Heart right ventricle (tissue), 16 donors: ENCODE measurements at regions of chr22 and their contacts with region 1.

Region 1: DNA sequence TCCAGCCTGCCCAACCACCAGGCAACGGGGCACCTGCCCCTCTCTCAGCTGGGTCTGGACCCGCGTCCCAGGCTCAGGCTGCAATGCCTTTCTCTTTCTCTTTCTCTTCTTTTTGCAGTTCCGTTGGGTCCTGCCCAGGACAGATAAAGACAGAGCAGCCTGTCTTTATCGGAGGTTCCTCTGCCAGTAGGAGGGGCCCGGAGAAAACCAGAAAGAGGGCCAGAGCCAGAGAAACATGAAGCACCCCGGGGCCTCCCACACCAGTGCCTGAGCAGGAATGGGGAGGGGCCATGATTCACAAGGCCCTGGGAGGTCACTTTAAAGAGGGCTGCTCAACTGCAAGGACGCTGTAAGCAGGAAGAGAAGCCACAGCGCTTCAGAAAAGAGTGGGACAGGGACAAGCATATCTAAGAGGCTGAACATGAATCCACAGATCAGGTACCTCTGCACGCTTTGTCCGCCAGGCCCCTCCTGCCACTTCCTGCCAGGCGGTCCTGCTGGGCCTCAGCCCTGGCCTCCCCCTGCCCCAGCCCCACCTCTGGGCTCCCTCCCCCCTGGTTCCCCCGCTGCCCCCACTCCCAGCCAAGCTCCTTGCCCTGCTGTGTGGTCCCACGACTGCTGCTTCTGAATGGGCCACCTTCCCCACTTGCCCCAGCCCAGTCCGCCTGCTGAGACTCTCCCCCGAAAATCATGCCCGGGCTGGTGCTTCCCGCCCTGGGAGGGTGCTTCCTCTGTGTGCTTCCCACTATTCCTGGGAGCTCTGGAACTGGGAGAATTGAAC is at the start of gene APOBEC3C:
- DNase-seq: peak; percentile 65 to 79
- ATAC-seq: peak; percentile 91 to 97 (median 96)
- H3K4me3 ChIP-seq: peak within 1 kb of the TSS; percentile 41 to 72 (median 61)
- H3K27ac ChIP-seq: peak within 1 kb of the TSS; percentile 58 to 95 (median 82)
- H3K4me1 ChIP-seq: peaks cover 0 to 27% (median 14%) of the 10 kb centered on the region in 9 donors
- H3K27me3 ChIP-seq: no peaks in the 10 kb centered on the region
- CTCF ChIP-seq: no peak
- total RNA-seq, gene APOBEC3C: 23.2 to 43.3 (median 25.7) TPM

Region 2: GRCh38 chr22:39078329-39078728 is 64.2 kb after region 1 on chr22:
- intact Hi-C with region 1: loop called in 2 of 10 experiments (anchors 2 to 10 kb)
- DNase-seq: no peak
- ATAC-seq: no peak
- H3K4me3 ChIP-seq: peak overlapping the region in 2 of 10 donors; percentile 66 to 67
- H3K27ac ChIP-seq: peak overlapping the region in 1 of 10 donors; percentile 94
- H3K4me1 ChIP-seq: peaks cover 0 to 12% (median 12%) of the 10 kb centered on the region in 9 donors
- H3K27me3 ChIP-seq: no peaks in the 10 kb centered on the region
- CTCF ChIP-seq: no peak

Region 3: GRCh38 chr22:39117585-39118191 is 103.6 kb after region 1 on chr22:
- intact Hi-C with region 1: loop called in 9 of 10 experiments (anchors 5 to 10 kb)
- DNase-seq: peak in 1 of 2 donors; percentile 32
- ATAC-seq: no peak
- H3K4me3 ChIP-seq: no peak overlapping the region
- H3K27ac ChIP-seq: peak overlapping the region in 1 of 10 donors; percentile 59
- H3K4me1 ChIP-seq: peaks cover 0 to 13% (median 0%) of the 10 kb centered on the region in 9 donors
- H3K27me3 ChIP-seq: peaks cover 0 to 49% (median 23%) of the 10 kb centered on the region in 7 donors
- CTCF ChIP-seq: peak; percentile 8 to 57 (median 46)